GM12878 (cell line): ENCODE measurements at regions of chr15 and their contacts with region 1.

Region 1: DNA sequence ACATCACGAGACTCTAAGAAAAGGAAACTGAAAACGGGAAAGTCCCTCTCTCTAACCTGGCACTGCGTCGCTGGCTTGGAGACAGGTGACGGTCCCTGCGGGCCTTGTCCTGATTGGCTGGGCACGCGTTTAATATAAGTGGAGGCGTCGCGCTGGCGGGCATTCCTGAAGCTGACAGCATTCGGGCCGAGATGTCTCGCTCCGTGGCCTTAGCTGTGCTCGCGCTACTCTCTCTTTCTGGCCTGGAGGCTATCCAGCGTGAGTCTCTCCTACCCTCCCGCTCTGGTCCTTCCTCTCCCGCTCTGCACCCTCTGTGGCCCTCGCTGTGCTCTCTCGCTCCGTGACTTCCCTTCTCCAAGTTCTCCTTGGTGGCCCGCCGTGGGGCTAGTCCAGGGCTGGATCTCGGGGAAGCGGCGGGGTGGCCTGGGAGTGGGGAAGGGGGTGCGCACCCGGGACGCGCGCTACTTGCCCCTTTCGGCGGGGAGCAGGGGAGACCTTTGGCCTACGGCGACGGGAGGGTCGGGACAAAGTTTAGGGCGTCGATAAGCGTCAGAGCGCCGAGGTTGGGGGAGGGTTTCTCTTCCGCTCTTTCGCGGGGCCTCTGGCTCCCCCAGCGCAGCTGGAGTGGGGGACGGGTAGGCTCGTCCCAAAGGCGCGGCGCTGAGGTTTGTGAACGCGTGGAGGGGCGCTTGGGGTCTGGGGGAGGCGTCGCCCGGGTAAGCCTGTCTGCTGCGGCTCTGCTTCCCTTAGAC is at the start of gene B2M:
- DNase-seq: peak; percentile 94
- ATAC-seq: peak; percentile 74
- H3K4me3 ChIP-seq: peak within 1 kb of the TSS; percentile 99
- H3K27ac ChIP-seq: peak within 1 kb of the TSS; percentile 99
- H3K4me1 ChIP-seq: peaks cover 16% of the 10 kb centered on the region
- H3K27me3 ChIP-seq: no peaks in the 10 kb centered on the region
- CTCF ChIP-seq: no peak
- EP300 ChIP-seq: no peak; a peak in 1 of 4 replicates
- POLR2A ChIP-seq: peak; percentile 98
- RAD21 ChIP-seq: no peak
- polyA plus RNA-seq, gene B2M: 16,306 to 22,794 TPM

Region 2: DNA sequence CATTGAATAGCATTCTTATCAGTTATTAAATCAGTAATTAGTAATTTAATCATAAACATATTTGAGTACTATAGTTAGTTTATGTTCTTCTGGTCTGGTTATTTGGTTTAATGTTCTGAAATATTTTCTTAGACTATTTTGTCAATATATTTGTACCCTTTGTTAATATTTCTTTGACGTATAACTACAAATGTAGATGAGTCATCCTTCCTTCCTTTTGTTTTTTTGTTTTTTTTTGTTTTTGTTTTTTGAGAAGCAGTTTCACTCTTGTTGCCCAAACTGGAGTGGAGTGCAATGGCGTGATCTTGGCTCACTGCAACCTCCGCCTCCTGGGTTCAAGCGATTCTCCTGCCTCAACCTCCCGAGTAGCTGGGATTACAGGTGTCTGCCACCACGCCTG is 192.0 kb before region 1 on chr15:
- CTCF ChIA-PET with region 1: no interaction called
- POLR2A ChIA-PET with region 1: no interaction called
- RAD21 ChIA-PET with region 1: no interaction called
- SMC1A ChIA-PET with region 1: no interaction called
- in situ Hi-C with region 1: no loop called
- intact Hi-C with region 1: no loop called
- DNase-seq: no peak
- ATAC-seq: no peak
- H3K4me3 ChIP-seq: no peak overlapping the region
- H3K27ac ChIP-seq: no peak overlapping the region
- H3K4me1 ChIP-seq: no peaks in the 10 kb centered on the region
- H3K27me3 ChIP-seq: no peaks in the 10 kb centered on the region
- CTCF ChIP-seq: no peak
- EP300 ChIP-seq: no peak
- POLR2A ChIP-seq: no peak
- RAD21 ChIP-seq: no peak

Region 3: DNA sequence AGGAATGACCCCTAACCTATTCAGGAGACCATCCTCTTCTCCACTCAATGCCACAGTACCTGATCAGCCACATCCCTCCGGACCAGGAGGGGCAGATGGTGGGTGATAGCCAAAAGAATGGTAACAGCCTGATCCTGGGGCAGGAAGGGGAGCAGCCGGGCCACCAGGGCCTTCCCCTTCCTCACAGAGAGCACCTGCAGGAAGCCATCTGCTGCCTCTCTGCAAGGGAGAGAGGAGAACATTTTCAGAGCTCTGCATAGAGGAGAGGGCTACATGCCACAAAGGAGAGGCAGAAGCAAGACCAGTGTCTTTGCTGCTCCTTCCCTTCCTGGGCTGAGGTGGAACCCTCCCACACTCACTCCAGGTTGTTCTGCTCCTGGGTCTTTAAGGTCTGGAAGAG is 42.6 kb before region 1 on chr15:
- CTCF ChIA-PET with region 1: interaction called, 203 read pairs
- POLR2A ChIA-PET with region 1: interaction called, 255 read pairs
- RAD21 ChIA-PET with region 1: interaction called, 231 read pairs
- SMC1A ChIA-PET with region 1: interaction called, 119 read pairs
- in situ Hi-C with region 1: loop called (anchors 5 kb)
- intact Hi-C with region 1: no loop called
- DNase-seq: no peak
- ATAC-seq: no peak
- H3K4me3 ChIP-seq: no peak overlapping the region
- H3K27ac ChIP-seq: no peak overlapping the region
- H3K4me1 ChIP-seq: peaks cover 62% of the 10 kb centered on the region
- H3K27me3 ChIP-seq: no peaks in the 10 kb centered on the region
- CTCF ChIP-seq: no peak
- EP300 ChIP-seq: no peak
- POLR2A ChIP-seq: no peak
- RAD21 ChIP-seq: no peak

Region 4: DNA sequence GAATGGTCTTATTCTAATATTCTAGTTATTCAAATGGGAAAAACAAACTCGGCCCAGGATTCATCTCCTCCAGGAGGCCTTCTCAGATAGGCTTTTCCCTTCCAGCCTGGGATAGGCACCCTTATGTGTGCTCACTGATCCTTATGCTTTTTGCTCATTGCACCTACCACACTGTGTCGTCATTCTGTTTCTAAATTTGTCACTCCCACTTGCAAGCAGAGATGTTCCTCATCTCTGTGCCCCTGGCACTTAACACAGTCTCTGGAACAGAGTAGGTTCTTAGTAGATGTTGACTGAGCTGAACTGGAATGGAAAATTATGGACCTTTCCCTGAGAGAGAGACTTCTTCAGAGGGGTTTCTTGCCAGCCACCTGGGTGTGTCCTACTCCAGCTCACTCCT is 29.3 kb before region 1 on chr15:
- CTCF ChIA-PET with region 1: interaction called, 8 read pairs
- POLR2A ChIA-PET with region 1: interaction called, 16 read pairs
- RAD21 ChIA-PET with region 1: interaction called, 23 read pairs
- SMC1A ChIA-PET with region 1: interaction called, 23 read pairs
- in situ Hi-C with region 1: no loop called
- intact Hi-C with region 1: no loop called
- DNase-seq: no peak
- ATAC-seq: peak; percentile 71
- H3K4me3 ChIP-seq: no peak overlapping the region
- H3K27ac ChIP-seq: no peak overlapping the region
- H3K4me1 ChIP-seq: peaks cover 28% of the 10 kb centered on the region
- H3K27me3 ChIP-seq: no peaks in the 10 kb centered on the region
- CTCF ChIP-seq: no peak
- EP300 ChIP-seq: no peak
- POLR2A ChIP-seq: no peak
- RAD21 ChIP-seq: no peak

Region 5: DNA sequence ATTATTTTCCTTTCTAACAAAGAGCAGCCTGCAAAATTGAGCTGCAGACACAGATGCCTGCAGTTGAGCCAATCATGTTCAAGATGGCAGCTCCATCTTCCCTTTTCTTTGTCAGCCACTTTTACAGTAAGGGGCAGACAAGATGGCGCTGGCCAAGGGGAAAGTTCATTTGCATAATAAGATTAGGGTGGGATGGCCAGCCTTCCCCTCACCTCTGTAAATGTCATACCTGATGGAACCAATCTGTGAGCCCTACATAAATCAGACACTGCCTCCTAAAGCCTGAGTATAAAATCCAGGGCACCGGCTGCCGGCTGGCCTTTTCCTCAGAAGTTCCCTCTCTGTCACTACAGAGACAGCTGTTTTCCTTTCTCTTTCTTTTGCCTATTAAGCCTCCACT is 16.2 kb before region 1 on chr15:
- CTCF ChIA-PET with region 1: interaction called, 12 read pairs
- POLR2A ChIA-PET with region 1: interaction called, 6 read pairs
- RAD21 ChIA-PET with region 1: interaction called, 4 read pairs
- SMC1A ChIA-PET with region 1: interaction called, 5 read pairs
- in situ Hi-C with region 1: no loop called
- intact Hi-C with region 1: no loop called
- DNase-seq: no peak
- ATAC-seq: no peak
- H3K4me3 ChIP-seq: no peak overlapping the region
- H3K27ac ChIP-seq: no peak overlapping the region
- H3K4me1 ChIP-seq: no peaks in the 10 kb centered on the region
- H3K27me3 ChIP-seq: no peaks in the 10 kb centered on the region; a peak in 1 of 4 replicates
- CTCF ChIP-seq: no peak
- EP300 ChIP-seq: no peak
- POLR2A ChIP-seq: no peak
- RAD21 ChIP-seq: no peak